GM23248 (cell line): ENCODE measurements at regions of chr3 and their contacts with region 1.

Region 1: DNA sequence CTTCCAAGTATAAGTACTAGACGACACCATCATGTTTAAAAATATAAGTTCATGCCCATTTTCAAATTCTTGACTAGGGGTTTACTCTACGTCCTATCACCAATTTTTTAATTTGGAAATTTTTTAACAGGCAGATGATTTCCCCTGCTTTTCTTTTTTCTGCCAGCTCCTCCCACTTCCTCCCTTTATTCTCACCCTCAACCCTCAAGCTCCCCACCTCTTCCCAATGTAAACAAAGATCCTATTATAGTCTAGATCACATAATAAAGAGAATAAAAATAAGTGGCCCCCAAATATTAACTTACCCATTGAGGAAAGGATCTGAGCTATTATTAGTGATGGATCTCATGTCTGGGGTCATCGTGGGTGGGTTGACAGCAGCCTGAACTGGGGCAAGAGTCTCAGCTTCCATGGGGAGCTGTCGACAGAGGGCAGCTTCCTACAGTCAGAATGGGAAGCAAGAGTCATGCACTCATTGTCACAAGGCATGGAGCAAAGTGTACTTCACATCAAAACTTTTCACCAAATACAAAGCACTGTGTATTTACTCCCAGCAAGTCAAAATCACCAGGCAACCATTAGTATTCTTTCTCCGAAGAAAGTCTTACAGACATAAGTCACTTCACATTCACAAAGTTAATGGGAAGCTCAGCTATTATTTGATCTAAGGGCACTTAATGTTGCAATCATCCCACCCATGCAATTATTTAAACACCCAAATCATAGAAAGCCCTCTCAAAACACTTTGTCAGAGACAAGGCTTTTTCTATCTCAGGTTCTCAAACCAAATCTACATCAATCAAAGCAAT is 53.2 kb downstream of the TM4SF4 start:
- DNase-seq: peak; percentile 38
- H3K4me3 ChIP-seq: no peak overlapping the region
- H3K27ac ChIP-seq: peak overlapping the region; percentile 12
- H3K4me1 ChIP-seq: peaks cover 25% of the 10 kb centered on the region
- H3K27me3 ChIP-seq: no peaks in the 10 kb centered on the region

Region 2: GRCh38 chr3:149717391-149718056 is 189.8 kb after region 1 on chr3:
- in situ Hi-C with region 1: loop called (anchors 10 kb)
- DNase-seq: peak; percentile 80
- H3K4me3 ChIP-seq: no peak overlapping the region
- H3K27ac ChIP-seq: no peak overlapping the region
- H3K4me1 ChIP-seq: no peaks in the 10 kb centered on the region
- H3K27me3 ChIP-seq: no peaks in the 10 kb centered on the region

Region 3: GRCh38 chr3:150227839-150228238 is 700.1 kb after region 1 on chr3:
- in situ Hi-C with region 1: no loop called
- DNase-seq: peak; percentile 71
- H3K4me3 ChIP-seq: no peak overlapping the region
- H3K27ac ChIP-seq: no peak overlapping the region
- H3K4me1 ChIP-seq: peaks cover 1% of the 10 kb centered on the region
- H3K27me3 ChIP-seq: no peaks in the 10 kb centered on the region